ENCODE measurements at regions of chr11 and their contacts with region 1.

Region 1: GRCh38 chr11:12461516-12461915 is 84.1 kb downstream of the PARVA start:
- DNase-seq: peak in 1 of 4 experiments; percentile 45
- ATAC-seq: peak; percentile 42; the same call in 2 of the 3 replicates
- H3K4me3 ChIP-seq: no peak overlapping the region
- H3K27ac ChIP-seq: no peak overlapping the region
- H3K4me1 ChIP-seq: 0 out of 5 replicates have a peak, but pooled peaks cover 0 to 2% of the 10 kb centered on the region in 2 experiments
- H3K27me3 ChIP-seq: peaks cover 2 to 15% of the 10 kb centered on the region in 2 experiments; a peak in 2 of 5 replicates
- CTCF ChIP-seq: no peak
- EP300 ChIP-seq: no peak
- POLR2A ChIP-seq: no peak
- RAD21 ChIP-seq: no peak

Region 2: GRCh38 chr11:12356944-12357650 is 104.4 kb before region 1 on chr11:
- CTCF ChIA-PET with region 1: no interaction called
- POLR2A ChIA-PET with region 1: no interaction called
- in situ Hi-C with region 1: no loop called
- intact Hi-C with region 1: no loop called
- DNase-seq: no peak
- ATAC-seq: no peak
- H3K4me3 ChIP-seq: no peak overlapping the region
- H3K27ac ChIP-seq: no peak overlapping the region
- H3K4me1 ChIP-seq: no peaks in the 10 kb centered on the region
- H3K27me3 ChIP-seq: peaks cover 5 to 11% of the 10 kb centered on the region in 2 experiments; a peak in 3 of 5 replicates
- CTCF ChIP-seq: no peak
- EP300 ChIP-seq: no peak
- POLR2A ChIP-seq: no peak
- RAD21 ChIP-seq: no peak

Region 3: DNA sequence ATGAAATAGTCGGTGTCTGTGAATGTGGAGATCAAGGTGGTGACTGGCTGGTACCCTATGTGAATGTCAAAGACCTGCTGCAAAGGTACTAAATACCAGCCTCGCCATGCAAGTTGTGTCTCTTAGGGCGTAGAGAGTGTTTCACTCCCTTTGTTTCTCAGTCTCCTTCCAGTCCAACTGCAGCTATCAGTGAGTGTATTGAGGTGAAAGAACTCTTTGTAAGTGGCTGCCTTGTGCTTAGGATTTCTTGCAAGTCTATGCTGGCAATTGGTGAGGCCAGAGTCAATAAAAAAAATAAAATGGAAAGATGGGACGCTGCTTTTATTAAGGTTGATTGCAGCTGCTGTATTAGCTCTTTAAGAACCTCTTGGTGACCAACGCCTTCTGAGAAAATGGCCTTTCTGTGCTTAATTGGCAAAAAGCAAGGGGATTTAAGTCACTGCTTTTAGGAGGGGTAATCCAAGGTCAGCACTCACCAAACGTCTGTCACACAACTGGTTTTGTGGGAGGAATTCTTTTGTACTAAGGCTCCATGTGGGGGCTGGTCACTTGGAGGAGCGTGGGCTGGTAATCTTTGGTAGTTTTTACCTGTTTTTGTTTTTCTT is 11.0 kb after region 1 on chr11:
- CTCF ChIA-PET with region 1: no interaction called
- POLR2A ChIA-PET with region 1: interaction called, 12 read pairs
- in situ Hi-C with region 1: no loop called
- intact Hi-C with region 1: no loop called
- DNase-seq: no peak
- ATAC-seq: no peak
- H3K4me3 ChIP-seq: no peak overlapping the region
- H3K27ac ChIP-seq: no peak overlapping the region
- H3K4me1 ChIP-seq: no peaks in the 10 kb centered on the region
- H3K27me3 ChIP-seq: peaks cover 29 to 42% of the 10 kb centered on the region in 2 experiments; a peak in 4 of 5 replicates
- CTCF ChIP-seq: no peak
- EP300 ChIP-seq: no peak
- POLR2A ChIP-seq: no peak
- RAD21 ChIP-seq: no peak

Region 4: DNA sequence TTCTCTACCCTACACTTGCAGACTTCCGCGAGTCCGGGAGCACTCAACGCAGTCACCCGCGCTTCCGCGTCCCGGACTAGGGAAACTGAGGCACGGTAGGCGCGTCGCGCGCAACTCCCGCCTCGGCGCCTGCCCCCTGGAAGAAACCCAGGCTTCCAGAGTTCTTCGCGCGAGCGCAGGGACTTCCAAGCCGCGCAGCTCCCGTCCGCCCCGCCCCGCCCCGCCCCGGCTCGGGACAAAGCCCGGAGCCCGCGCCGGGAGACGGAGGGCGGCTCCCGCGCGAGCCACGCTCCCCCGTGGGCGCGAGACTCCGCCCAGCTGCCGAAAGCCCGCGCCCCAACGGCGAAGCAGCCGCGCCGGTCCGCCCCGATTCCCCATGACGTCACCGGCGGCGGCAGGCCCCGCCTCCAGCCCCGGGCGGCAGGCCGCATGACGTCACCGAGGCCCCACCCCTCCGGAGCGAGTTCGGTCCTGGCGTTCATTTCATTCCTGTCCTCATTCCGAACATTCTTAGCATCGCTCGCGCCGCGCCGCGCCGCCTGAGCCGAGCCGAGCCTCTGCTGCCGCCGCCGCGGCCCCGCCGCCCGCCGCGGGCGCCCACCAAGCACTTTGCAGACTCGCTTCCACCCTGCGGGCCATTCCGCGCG is 212.5 kb after region 1 on chr11 and contains the start of gene TEAD1:
- CTCF ChIA-PET with region 1: no interaction called
- POLR2A ChIA-PET with region 1: no interaction called
- in situ Hi-C with region 1: no loop called
- intact Hi-C with region 1: no loop called
- DNase-seq: peak; percentile 94 to 99 (median 98)
- ATAC-seq: peak; percentile 95
- H3K4me3 ChIP-seq: peak within 1 kb of the TSS; percentile 74
- H3K27ac ChIP-seq: peak within 1 kb of the TSS; percentile 86
- H3K4me1 ChIP-seq: peaks cover 5 to 12% of the 10 kb centered on the region in 2 experiments; a peak in 3 of 5 replicates
- H3K27me3 ChIP-seq: no peaks in the 10 kb centered on the region
- CTCF ChIP-seq: no peak; a peak in 1 of 6 replicates
- EP300 ChIP-seq: no peak; the same call in 1 of the 2 replicates
- POLR2A ChIP-seq: peak; percentile 79
- RAD21 ChIP-seq: no peak; a peak in 1 of 4 replicates
- polyA plus RNA-seq, gene TEAD1: 1.7 to 2.1 TPM

Measured in K562 (cell line).